ENCODE measurements at regions of chr12 and their contacts with region 1.

Region 1: DNA sequence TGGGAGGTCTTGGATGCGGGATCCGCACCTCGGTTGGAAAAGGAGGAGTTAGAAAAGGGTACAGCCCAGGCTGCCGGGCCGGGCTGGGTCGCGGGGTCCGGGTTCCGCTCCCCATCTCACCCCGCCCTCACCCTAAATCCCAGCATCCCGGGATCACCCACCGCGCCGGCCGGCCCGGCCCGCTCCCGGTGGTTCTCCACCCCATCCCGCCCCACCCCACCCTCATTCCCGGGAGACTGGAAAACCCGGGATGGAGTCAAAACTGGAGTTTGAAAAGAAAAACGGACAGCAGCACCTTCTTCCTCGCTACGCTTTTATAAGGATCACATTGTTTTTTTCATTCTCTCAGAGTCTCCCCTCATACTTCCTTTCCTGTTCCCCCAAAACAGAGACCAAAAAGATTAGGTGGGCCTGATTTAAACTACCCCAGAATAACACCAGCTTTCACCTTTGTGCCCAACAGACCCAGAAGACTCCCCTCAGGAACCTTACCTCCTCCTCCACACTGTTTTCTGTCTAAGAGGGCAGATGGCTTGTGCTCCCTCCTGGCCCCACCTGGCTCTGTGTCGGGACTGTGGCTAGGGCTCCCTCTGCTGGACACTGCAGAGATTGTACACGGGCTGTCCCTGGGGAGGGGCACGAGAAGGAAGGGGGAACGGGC is 2.8 kb downstream of the GLI1 start:
- DNase-seq: no peak
- H3K4me3 ChIP-seq: peak overlapping the region; percentile 77
- CTCF ChIP-seq: peak; percentile 99

Region 2: DNA sequence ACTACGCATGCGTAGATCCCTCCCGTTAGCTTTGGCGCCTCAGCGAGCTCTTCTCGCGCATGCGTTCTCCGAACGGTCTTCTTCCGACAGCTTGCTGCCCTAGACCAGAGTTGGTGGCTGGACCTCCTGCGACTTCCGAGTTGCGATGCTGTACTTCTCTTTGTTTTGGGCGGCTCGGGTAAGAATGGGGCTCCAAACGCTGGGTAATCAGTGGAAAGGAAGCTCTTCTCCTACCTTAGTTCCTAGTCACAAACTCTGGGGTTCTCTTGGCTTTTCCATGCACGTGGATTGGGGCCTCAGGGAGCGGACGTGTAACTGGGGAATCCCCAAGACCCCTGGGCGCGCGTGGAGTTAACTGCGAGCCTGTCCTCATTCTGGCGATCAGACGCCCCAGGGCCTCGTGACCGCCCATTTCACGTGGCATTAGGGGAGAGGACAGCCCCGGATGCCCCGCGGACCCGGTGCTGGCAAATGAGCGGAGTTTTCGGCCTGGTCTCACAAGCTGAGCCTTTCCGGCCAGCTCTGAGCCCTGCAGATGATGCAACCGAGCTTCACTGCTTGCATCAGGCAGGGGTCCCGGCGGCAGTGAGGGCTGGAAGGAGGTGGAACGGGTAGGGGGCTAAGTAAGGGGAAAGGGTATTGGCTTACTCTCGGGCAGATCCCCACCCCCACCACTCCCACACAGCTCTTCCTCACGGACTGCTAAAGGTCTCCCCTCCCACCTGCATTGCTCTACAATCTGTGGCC is 232.6 kb before region 1 on chr12 and contains the start of gene SHMT2:
- CTCF ChIA-PET with region 1: interaction called, 12 read pairs
- POLR2A ChIA-PET with region 1: interaction called, 4 read pairs
- DNase-seq: peak; percentile 78
- H3K4me3 ChIP-seq: peak within 1 kb of the TSS; percentile 93
- CTCF ChIP-seq: no peak

Region 3: GRCh38 chr12:57280211-57281062 is 181.9 kb before region 1 on chr12:
- CTCF ChIA-PET with region 1: interaction called, 12 read pairs
- POLR2A ChIA-PET with region 1: no interaction called
- DNase-seq: peak; percentile 79
- H3K4me3 ChIP-seq: no peak overlapping the region
- CTCF ChIP-seq: no peak

Region 4: DNA sequence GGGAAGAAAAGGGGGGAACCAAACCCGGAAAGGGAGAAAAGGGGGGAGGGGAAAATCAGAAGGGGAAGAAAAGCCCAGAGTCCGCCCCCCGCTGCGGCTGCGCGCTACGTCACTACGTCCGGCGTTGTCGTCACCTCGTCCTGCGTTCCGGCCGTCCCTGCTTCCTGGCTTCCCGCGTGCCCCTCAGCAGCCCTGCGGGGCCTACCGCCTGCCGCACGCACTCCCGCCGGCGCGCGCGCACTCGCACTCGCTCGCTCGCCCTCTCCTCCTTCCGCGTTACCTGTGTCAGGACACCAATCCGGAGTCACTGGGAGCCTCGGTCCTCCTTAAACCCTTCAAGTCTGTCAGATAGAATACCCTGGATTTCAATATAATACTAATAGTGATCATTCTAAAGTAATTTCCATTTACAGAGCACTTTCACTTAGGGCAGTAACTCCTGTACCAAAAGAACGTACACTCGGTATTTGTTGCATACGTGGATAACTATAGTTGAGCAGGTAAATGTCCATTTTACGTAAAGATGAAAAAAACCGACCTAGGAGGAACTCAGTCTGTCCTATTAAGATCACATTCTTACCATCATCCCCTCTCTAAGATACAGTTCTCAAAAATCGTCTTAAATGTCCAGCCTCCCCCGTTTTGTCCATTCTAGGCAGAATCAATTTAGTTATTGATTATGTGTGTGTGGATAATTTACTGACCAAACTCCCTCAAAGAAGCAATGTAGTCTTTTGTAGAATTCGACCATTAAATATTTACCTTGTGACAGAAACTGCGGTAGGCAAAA is 31.3 kb before region 1 on chr12 and contains the start of gene R3HDM2:
- CTCF ChIA-PET with region 1: interaction called, 12 read pairs
- POLR2A ChIA-PET with region 1: no interaction called
- DNase-seq: peak; percentile 57
- H3K4me3 ChIP-seq: peak within 1 kb of the TSS; percentile 65
- CTCF ChIP-seq: peak; percentile 22

Region 5: GRCh38 chr12:57520053-57520871 is 57.9 kb after region 1 on chr12 and contains the start of gene DDIT3:
- CTCF ChIA-PET with region 1: interaction called, 7 read pairs
- POLR2A ChIA-PET with region 1: interaction called, 10 read pairs
- DNase-seq: peak; percentile 85
- H3K4me3 ChIP-seq: peak within 1 kb of the TSS; percentile 100
- CTCF ChIP-seq: no peak

Region 6: GRCh38 chr12:57632694-57633477 is 170.5 kb after region 1 on chr12 and contains the start of gene B4GALNT1:
- CTCF ChIA-PET with region 1: interaction called, 14 read pairs
- POLR2A ChIA-PET with region 1: no interaction called
- DNase-seq: no peak
- H3K4me3 ChIP-seq: peak within 1 kb of the TSS; percentile 67
- CTCF ChIP-seq: peak; percentile 93

Region 7: DNA sequence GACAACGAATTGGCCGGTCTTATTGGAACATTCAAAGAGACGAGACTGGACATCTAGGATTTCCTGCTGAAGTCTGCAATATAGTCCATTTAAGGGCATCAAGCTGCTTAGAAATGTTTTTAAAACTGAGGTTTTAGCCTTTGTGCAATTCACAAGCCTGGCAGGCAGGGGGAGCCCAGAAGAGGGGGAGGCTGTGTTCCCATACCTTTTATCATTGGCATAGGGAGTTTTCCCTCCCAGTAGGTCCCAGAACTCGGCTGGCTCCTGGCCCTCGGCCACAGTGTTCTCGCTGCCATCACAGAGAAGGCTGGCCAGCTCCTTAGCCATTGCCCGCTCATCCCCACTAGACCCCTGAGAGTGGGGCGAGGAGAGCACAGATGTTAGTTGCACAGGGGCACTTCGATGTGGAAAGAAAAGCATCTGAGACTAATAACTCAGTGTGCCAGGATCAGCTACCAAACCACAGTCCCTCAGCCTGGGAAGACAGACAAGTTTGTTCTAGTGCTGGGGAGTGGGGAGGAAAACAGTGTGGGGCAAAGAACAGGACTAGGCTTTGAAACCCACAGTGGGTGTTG is 341.0 kb after region 1 on chr12:
- CTCF ChIA-PET with region 1: no interaction called
- POLR2A ChIA-PET with region 1: no interaction called
- DNase-seq: no peak
- H3K4me3 ChIP-seq: no peak overlapping the region
- CTCF ChIP-seq: peak; percentile 83

Measured in AG04449 (cell line).